Mammary epithelial cell (primary cell): ENCODE measurements at regions of chr6 and their contacts with region 1.

Region 1: DNA sequence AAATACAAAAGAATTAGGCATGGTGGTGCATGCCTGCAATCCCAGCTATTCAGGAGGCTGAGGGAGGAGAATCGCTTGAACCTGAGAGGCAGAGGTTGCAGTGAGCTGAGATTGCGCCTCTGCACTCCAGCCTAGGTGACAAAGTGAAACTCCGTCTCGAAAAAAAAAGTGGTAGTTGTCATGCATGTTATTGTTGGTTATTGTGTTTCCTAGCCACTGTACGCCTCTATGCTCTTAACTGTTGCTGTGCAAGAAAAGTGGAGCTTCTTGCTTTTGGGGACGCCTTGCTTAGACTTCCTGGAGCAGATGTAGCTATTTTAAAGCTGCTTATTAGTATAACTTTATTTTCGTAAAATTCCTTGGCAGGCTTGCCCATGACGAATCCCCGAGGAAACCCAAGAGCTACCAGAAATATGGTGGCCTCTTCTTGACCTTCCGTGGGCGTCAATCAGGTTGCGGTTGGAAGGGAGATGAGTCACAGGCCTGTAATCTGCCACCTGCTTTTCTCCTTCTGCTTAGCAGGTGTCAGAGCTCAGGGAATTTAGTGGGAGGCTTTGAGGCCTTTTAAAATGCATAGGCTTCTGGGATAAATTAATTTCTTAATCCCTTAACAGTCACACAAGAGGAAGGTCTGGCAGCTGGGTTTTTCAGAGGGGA is 17.3 kb downstream of the GABRR2 start:
- DNase-seq: peak; percentile 95
- H3K4me3 ChIP-seq: no peak overlapping the region
- H3K27ac ChIP-seq: no peak overlapping the region
- H3K4me1 ChIP-seq: peaks cover 17% of the 10 kb centered on the region
- H3K27me3 ChIP-seq: peaks cover 15% of the 10 kb centered on the region
- CTCF ChIP-seq: no peak

Region 2: GRCh38 chr6:89139509-89140346 is 158.1 kb before region 1 on chr6:
- CTCF ChIA-PET with region 1: no interaction called
- dilution Hi-C with region 1: no loop called
- in situ Hi-C with region 1: no loop called
- intact Hi-C with region 1: no loop called
- DNase-seq: peak; percentile 29
- H3K4me3 ChIP-seq: no peak overlapping the region
- H3K27ac ChIP-seq: no peak overlapping the region
- H3K4me1 ChIP-seq: no peaks in the 10 kb centered on the region
- H3K27me3 ChIP-seq: no peaks in the 10 kb centered on the region
- CTCF ChIP-seq: no peak

Region 3: GRCh38 chr6:89352278-89353117 is 54.7 kb after region 1 on chr6 and contains the start of gene UBE2J1:
- CTCF ChIA-PET with region 1: interaction called, 3 read pairs
- dilution Hi-C with region 1: loop called (anchors 5 kb)
- in situ Hi-C with region 1: no loop called
- intact Hi-C with region 1: loop called (anchors 1 kb)
- DNase-seq: peak; percentile 91
- H3K4me3 ChIP-seq: peak within 1 kb of the TSS; percentile 72 to 96 (median 90)
- H3K27ac ChIP-seq: peak within 1 kb of the TSS; percentile 74
- H3K4me1 ChIP-seq: peaks cover 21% of the 10 kb centered on the region
- H3K27me3 ChIP-seq: no peaks in the 10 kb centered on the region
- CTCF ChIP-seq: peak in 1 of 2 donors; percentile 0
- total RNA-seq, gene UBE2J1: 22.9 to 25.3 TPM